PC-3 (cell line): ENCODE measurements at regions of chr1 and their contacts with region 1.

Region 1: GRCh38 chr1:241531195-241532161 is 700 bp upstream of the KMO start:
- DNase-seq: peak; percentile 97
- ATAC-seq: peak; percentile 91
- H3K4me3 ChIP-seq: peak overlapping the region; percentile 69
- H3K27ac ChIP-seq: peak overlapping the region; percentile 47
- H3K4me1 ChIP-seq: peaks cover 29% of the 10 kb centered on the region
- H3K27me3 ChIP-seq: no peaks in the 10 kb centered on the region
- CTCF ChIP-seq: peak; percentile 96

Region 2: GRCh38 chr1:241605146-241605805 is 73.8 kb after region 1 on chr1:
- CTCF ChIA-PET with region 1: interaction called, 7 read pairs
- POLR2A ChIA-PET with region 1: no interaction called
- intact Hi-C with region 1: loop called (anchors 1 kb)
- DNase-seq: peak; percentile 98
- ATAC-seq: peak; percentile 34
- H3K4me3 ChIP-seq: no peak overlapping the region
- H3K27ac ChIP-seq: peak overlapping the region; percentile 88
- H3K4me1 ChIP-seq: peaks cover 74% of the 10 kb centered on the region
- H3K27me3 ChIP-seq: no peaks in the 10 kb centered on the region
- CTCF ChIP-seq: peak; percentile 99

Region 3: GRCh38 chr1:241627453-241628259 is 96.2 kb after region 1 on chr1:
- CTCF ChIA-PET with region 1: interaction called, 3 read pairs
- POLR2A ChIA-PET with region 1: no interaction called
- intact Hi-C with region 1: loop called (anchors 1 kb)
- DNase-seq: peak; percentile 97
- ATAC-seq: peak; percentile 66
- H3K4me3 ChIP-seq: no peak overlapping the region
- H3K27ac ChIP-seq: 0 out of 2 replicates have a peak overlapping the region, but pooled peaks have one; percentile 0
- H3K4me1 ChIP-seq: peaks cover 33% of the 10 kb centered on the region
- H3K27me3 ChIP-seq: no peaks in the 10 kb centered on the region
- CTCF ChIP-seq: peak; percentile 98

Region 4: DNA sequence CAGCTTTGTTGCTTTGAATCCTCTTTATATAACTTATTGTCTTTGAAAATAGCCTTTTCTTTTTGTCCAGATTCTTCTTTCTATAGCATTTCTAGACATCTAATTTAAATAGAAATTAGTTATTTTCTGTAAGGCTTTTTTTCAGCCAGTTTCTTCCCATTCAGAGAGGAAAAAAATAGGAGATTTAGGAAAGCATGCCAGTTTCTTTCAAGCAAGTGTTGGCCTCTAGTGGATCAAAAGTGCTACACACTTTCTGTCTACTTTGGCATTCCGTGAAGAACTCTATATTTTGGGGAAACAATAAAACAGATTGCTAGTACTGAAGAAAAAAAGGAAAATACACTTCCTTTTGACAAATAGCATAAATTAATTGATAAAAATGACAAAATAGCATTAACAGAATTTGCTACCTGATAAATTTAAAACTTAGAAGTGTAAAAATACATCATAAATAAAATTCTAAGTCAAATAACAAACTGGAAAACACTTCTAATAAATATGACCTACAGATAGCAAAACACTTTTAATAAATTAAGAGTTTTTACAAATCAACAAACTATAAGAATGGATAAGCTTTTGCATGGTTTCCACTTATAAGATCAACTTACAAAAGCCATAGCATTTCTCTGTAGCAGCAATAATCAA is 303.4 kb after region 1 on chr1:
- CTCF ChIA-PET with region 1: interaction called, 4 read pairs
- POLR2A ChIA-PET with region 1: no interaction called
- intact Hi-C with region 1: loop called (anchors 1 kb)
- DNase-seq: peak; percentile 76
- ATAC-seq: peak; percentile 52
- H3K4me3 ChIP-seq: no peak overlapping the region
- H3K27ac ChIP-seq: no peak overlapping the region
- H3K4me1 ChIP-seq: peaks cover 28% of the 10 kb centered on the region
- H3K27me3 ChIP-seq: no peaks in the 10 kb centered on the region
- CTCF ChIP-seq: peak; percentile 93

Region 5: DNA sequence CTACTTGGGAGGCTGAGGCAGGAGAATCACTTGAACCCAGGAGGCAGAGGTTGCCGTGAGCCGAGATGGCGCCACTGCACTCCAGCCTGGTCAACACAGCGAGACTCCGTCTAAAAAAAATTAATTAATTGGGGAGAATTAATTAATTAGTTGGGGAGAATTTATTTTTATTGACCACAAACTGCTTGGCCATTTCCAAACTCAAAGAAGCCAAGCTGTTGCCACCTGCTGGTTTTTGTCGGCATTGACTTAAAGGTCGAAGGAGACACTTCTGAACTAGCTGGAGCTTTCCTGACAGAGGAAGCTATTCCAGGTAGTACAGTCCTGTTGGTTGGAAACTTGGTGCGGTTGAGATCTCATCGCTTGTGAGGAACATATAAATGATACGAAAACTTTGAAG is 454.3 kb after region 1 on chr1:
- CTCF ChIA-PET with region 1: no interaction called
- POLR2A ChIA-PET with region 1: no interaction called
- intact Hi-C with region 1: loop called (anchors 5 kb)
- DNase-seq: peak; percentile 79
- ATAC-seq: peak; percentile 62
- H3K4me3 ChIP-seq: no peak overlapping the region
- H3K27ac ChIP-seq: no peak overlapping the region
- H3K4me1 ChIP-seq: peaks cover 27% of the 10 kb centered on the region
- H3K27me3 ChIP-seq: no peaks in the 10 kb centered on the region
- CTCF ChIP-seq: peak; percentile 78